Activated naive CD4-positive, alpha-beta T cell treated with anti-CD3 and anti-CD28 coated beads, Interleukin-2, amount 10 ng/mL, durations not matched to agents 7 days and 5 days (primary cell): ENCODE measurements at regions of chr16 and their contacts with region 1.

Region 1: DNA sequence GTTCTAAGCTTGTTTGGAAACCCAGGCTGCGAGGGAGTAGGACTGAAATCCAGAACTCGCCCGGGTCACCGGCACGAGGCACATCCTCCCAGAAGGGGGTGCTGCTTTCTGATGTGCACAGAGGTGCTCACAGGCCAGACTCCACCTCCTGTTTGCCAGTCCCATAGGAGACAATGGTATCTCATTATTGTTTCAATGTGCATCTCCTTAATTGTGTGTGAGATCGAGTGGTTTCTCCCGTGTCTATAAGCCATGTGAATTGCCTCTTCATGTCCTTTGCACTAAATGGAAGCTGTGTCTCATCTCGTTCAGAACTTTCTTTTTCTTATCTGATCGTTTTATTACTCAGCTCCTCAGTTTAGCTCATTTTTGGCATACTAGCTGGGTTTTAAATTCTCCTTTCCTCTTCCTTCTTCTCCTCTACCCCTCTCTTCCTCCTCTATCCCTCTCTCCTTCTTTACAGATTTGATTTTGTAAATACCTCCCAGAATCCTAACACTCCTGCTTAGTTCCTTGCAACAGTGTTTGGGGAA is 32.1 kb upstream of the PRKCB start:
- DNase-seq: peak; percentile 86
- H3K4me3 Mint-ChIP-seq: no peak overlapping the region
- H3K27ac Mint-ChIP-seq: no peak overlapping the region
- H3K4me1 Mint-ChIP-seq: peaks cover 14% of the 10 kb centered on the region
- H3K27me3 Mint-ChIP-seq: peaks cover 9% of the 10 kb centered on the region

Region 2: DNA sequence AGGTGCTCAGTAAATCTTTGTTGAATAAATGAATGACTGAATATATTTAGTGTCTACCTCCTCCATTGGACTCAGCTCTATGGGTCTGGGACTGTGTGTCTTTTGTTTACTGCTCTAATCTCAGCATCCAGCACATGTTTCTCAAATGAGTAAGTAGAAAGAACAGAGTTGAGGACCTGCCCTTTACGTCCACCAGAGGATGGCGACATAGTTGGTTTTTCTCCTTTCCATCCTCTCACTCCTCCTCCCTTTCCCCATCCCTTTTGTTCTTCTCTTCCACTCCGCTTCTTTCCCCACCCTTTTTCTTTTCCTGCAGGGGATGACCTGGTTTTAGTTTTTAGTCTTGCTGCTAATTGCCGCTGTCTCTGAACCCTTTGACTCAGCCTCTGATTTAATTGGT is 60.9 kb before region 1 on chr16:
- CTCF ChIA-PET with region 1: no interaction called
- DNase-seq: no peak
- H3K4me3 Mint-ChIP-seq: no peak overlapping the region
- H3K27ac Mint-ChIP-seq: no peak overlapping the region
- H3K4me1 Mint-ChIP-seq: no peaks in the 10 kb centered on the region
- H3K27me3 Mint-ChIP-seq: peaks cover 46% of the 10 kb centered on the region

Region 3: GRCh38 chr16:23784811-23785447 is 18.7 kb before region 1 on chr16:
- CTCF ChIA-PET with region 1: no interaction called
- DNase-seq: no peak
- H3K4me3 Mint-ChIP-seq: no peak overlapping the region
- H3K27ac Mint-ChIP-seq: no peak overlapping the region
- H3K4me1 Mint-ChIP-seq: no peaks in the 10 kb centered on the region
- H3K27me3 Mint-ChIP-seq: peaks cover 52% of the 10 kb centered on the region

Region 4: DNA sequence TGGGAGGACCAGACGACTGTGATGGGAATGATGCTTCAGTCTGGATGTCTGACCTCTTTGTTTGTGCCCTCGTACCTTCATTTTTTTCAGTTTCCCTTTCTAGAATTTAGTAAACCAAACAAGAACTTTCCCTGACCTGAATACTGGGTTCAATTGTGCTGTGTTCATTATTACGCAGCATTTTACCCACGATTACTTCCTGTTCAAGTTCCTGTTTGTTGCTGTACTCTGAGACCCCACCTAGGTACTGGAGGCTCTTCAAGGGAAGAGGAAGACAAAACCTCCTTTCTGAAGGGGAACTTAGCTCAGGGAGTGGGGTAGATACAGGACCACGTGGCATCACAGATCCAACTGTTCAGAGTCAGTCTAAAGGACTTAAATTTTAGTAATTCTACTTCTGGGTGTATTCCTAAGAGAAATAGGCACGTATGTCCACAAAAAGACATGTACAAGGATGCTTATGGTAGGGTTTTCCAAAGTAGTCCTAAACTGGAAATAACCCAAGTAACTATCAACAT is 22.9 kb after region 1 on chr16:
- CTCF ChIA-PET with region 1: interaction called, 20 read pairs
- DNase-seq: peak; percentile 35
- H3K4me3 Mint-ChIP-seq: peak overlapping the region; percentile 22
- H3K27ac Mint-ChIP-seq: peak overlapping the region; percentile 86
- H3K4me1 Mint-ChIP-seq: peaks cover 54% of the 10 kb centered on the region
- H3K27me3 Mint-ChIP-seq: peaks cover 7% of the 10 kb centered on the region

Region 5: DNA sequence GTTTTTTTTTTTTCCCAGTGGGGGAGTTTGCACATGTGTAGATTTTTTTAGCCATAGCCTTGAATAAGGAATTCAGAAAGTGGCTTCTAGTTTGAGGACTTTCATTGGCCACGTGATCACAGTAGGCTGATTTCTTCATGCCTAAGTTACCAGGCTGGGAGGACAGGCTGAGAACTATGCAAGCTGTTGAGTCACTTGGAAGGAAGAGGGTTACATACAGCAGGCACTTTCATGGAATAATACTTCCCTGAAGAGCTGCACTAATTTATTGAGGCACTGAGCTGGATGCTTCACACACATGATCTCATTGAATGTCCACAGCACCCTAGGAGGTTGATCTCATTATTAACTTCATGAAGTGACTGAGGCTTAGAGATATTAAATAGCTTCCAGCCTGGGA is 54.9 kb after region 1 on chr16:
- CTCF ChIA-PET with region 1: interaction called, 11 read pairs
- DNase-seq: no peak
- H3K4me3 Mint-ChIP-seq: no peak overlapping the region
- H3K27ac Mint-ChIP-seq: no peak overlapping the region
- H3K4me1 Mint-ChIP-seq: peaks cover 61% of the 10 kb centered on the region
- H3K27me3 Mint-ChIP-seq: no peaks in the 10 kb centered on the region

Region 6: DNA sequence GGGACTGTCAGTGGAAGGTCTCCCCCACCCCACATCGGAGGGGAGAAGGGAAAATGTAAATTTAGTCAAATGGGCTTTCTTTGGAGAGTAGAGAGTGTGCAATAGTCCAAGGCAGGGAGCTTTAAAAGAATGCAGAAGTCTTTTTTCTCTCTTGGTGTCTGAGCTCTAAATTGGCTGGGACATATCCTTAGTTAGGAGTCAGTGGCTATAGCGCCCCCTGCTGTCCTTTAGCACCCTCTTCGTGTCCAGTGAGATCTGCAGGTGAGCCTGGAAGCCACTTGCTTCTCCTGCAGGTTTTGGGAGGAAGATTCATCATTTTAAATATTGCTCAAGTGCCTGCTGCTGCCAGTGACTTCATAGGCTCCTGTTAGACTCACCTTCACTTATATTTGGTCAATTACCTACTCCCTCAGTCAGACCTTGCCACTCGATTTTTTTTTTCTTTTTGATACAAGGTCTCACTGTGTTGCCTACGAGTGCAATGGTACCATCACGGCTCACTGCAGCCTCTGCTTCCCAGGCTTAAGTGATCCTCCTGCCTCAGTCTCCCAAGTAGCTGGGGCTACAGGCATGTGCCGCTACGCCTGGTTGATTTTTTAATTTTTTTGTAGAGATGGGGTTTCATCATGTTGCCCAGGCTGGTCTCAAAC is 206.9 kb after region 1 on chr16:
- CTCF ChIA-PET with region 1: interaction called, 303 read pairs
- DNase-seq: peak; percentile 88
- H3K4me3 Mint-ChIP-seq: no peak overlapping the region
- H3K27ac Mint-ChIP-seq: no peak overlapping the region
- H3K4me1 Mint-ChIP-seq: peaks cover 55% of the 10 kb centered on the region
- H3K27me3 Mint-ChIP-seq: no peaks in the 10 kb centered on the region

Region 7: GRCh38 chr16:24036614-24037013 is 233.0 kb after region 1 on chr16:
- CTCF ChIA-PET with region 1: interaction called, 57 read pairs
- DNase-seq: peak; percentile 52
- H3K4me3 Mint-ChIP-seq: no peak overlapping the region
- H3K27ac Mint-ChIP-seq: no peak overlapping the region
- H3K4me1 Mint-ChIP-seq: peaks cover 52% of the 10 kb centered on the region
- H3K27me3 Mint-ChIP-seq: no peaks in the 10 kb centered on the region

Region 8: DNA sequence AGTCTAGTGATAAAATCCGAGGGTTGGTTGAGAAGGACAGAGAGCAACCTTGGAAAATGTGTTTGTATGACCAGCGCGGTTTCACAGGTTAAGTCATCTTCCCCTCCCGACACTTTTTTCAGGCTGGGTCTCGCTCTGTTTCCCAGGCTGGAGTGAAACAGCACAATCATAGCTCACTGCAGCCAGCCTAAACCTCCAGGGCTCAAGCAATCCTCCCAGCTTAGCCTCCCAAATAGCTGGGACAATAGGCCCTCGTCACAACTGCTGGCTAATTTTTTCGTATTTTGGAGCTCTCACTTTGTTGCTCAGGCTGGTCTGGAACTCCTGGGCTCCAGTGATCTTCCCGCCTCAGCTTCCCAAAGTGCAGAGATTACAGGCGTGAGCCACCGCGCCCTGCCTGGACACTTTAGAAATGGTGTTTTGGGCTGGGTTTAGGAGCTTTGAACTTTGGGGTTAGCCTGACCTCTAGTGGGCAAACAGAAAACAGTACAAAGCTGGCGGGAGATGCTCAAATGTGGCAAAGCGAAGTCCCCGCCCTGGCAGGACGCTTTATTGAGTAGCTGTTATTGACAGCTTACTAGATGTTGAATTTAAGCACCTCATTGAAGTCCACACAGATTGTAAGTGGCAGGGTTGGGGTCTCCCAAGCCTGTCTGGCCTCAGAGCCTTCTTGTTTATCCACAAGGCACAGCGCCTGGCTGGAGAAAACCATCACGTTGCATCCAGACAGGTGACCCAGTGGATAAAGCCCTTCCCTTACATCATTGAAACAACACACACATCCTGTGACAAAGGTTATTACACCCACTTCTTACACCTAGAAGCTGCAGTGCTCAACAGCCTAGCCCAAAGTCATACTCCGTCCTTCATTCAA is 701.1 kb after region 1 on chr16:
- CTCF ChIA-PET with region 1: interaction called, 19 read pairs
- DNase-seq: peak; percentile 67
- H3K4me3 Mint-ChIP-seq: no peak overlapping the region
- H3K27ac Mint-ChIP-seq: no peak overlapping the region
- H3K4me1 Mint-ChIP-seq: no peaks in the 10 kb centered on the region
- H3K27me3 Mint-ChIP-seq: peaks cover 61% of the 10 kb centered on the region